OCI-LY7 (cell line): ENCODE measurements at regions of chr2 and their contacts with region 1.

Region 1: GRCh38 chr2:191150600-191151330 is at the start of gene STAT4:
- DNase-seq: no peak
- H3K4me3 ChIP-seq: no peak within 1 kb of the TSS
- H3K27ac ChIP-seq: no peak within 1 kb of the TSS
- H3K4me1 ChIP-seq: no peaks in the 10 kb centered on the region
- CTCF ChIP-seq: no peak
- total RNA-seq, gene STAT4: not detected in 2 replicates

Region 2: DNA sequence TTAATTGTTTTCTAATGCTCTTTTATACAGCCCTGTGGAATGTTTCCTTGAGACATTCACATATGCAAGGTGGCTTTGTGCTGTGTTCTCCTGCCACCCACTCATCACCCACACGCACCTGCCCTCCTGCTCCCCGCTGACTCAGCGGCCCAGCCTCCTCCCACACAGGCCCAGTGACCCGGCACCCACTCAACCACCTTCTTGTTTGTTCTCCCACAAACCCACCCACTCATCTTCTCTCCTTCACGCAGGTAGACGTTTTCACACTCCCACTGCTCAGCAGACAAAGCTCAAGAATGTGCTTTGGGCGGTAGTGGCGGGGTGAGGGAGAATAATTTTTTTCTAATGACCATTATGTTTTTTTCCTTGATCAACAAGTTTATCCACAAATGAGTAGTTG is 587.7 kb before region 1 on chr2:
- CTCF ChIA-PET with region 1: no interaction called
- POLR2A ChIA-PET with region 1: no interaction called
- intact Hi-C with region 1: no loop called
- DNase-seq: no peak
- H3K4me3 ChIP-seq: no peak overlapping the region
- H3K27ac ChIP-seq: no peak overlapping the region
- H3K4me1 ChIP-seq: no peaks in the 10 kb centered on the region
- CTCF ChIP-seq: no peak

Region 3: DNA sequence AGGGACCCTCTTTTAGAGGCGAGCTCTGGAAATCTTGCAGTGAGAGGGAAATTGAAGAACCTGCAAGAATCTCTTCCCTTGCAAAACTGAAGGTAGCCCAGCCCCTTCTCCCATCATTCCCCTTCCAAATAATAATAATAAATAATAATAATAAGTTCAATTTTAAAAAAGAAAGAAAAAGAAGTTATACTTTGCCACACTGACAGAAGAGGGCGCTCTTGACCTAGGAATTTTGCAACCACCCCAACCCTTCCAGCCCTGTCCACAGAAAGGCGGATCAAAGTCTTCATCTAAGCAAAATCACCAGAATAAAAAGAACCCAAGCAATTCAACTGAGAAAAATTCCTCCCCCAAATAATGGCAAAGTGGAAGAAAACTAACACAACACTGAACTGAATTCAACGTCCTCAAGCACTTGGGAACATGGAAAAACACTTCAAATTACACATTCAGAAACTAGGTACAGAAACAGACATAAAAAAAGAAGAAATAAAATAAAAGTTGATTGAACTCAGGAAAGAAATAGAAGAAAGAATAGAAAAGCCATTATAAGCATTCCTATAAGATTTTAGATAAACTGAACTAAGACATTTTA is 369.1 kb before region 1 on chr2:
- CTCF ChIA-PET with region 1: no interaction called
- POLR2A ChIA-PET with region 1: no interaction called
- intact Hi-C with region 1: loop called (anchors 2 kb)
- DNase-seq: peak; percentile 51
- H3K4me3 ChIP-seq: no peak overlapping the region
- H3K27ac ChIP-seq: no peak overlapping the region
- H3K4me1 ChIP-seq: no peaks in the 10 kb centered on the region
- CTCF ChIP-seq: peak; percentile 79

Region 4: GRCh38 chr2:190853531-190854383 is 297.0 kb before region 1 on chr2:
- CTCF ChIA-PET with region 1: no interaction called
- POLR2A ChIA-PET with region 1: no interaction called
- intact Hi-C with region 1: loop called (anchors 10 kb)
- DNase-seq: no peak
- H3K4me3 ChIP-seq: no peak overlapping the region
- H3K27ac ChIP-seq: no peak overlapping the region
- H3K4me1 ChIP-seq: no peaks in the 10 kb centered on the region
- CTCF ChIP-seq: no peak

Region 5: DNA sequence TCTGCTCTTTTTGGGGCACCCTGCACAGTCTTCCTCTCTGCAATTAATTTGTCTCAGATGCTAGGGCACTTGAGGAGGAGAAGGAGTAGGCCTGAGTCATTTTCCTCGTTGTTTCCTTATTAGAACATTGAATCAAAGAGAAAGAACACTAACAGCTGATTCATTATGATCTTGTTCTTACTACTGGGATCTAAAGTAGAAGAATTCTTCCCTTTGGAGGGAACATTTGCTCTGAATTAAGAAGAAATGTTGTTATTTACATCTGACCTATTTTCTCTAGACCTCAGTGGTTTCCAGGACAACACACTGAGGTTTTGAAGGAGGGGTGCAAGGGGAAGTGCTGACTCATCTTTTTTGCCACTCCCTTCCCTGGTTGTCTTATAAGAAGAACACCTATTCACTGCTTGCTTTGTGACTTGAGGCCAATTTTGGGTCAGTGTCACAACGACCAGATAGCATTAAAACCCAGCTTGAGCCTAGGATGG is 112.5 kb before region 1 on chr2:
- CTCF ChIA-PET with region 1: no interaction called
- POLR2A ChIA-PET with region 1: no interaction called
- intact Hi-C with region 1: no loop called
- DNase-seq: no peak
- H3K4me3 ChIP-seq: no peak overlapping the region
- H3K27ac ChIP-seq: no peak overlapping the region
- H3K4me1 ChIP-seq: no peaks in the 10 kb centered on the region
- CTCF ChIP-seq: no peak

Region 6: DNA sequence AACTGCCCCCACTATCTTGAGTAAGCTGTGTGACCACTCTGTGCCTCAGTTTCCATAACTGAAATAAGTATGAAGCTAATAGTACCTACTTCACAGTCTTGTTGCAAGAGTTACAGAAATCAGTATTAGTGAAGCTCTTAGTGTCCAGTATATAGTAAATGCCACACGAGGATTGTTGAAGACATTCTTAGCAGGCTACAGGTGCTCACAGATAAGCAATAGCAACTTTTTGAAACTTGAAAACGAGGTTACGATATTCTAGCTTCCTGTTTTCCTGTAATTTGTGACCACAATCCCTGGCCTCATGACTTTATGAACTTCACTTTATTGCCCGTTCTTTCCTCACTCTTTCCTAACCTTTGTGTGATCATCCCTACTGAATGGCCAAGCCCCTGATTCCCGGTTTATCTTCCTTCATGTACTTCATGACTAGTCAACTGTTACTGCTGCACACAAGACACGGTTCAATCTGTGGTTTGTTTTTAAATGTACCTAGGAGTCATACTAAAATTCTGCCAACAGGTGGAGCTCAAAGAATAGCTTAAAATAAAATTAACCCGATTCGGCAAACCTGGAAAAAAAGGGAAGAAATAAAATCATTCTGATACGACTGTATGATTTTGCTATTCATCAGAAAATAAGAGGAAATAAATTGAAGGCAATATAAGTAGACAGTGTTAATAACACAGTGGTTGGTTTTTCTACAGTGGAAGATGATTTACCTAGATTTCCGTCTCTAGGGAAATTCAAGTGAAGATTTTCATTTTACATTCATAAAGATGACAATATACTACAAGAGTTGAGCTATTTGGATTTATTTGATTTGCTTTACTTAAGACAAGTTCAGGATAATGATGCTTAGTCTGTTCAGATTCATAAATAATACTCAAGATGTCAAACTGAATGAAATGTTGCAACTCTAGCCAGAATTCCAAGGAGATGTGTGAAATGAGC is 98.7 kb before region 1 on chr2:
- CTCF ChIA-PET with region 1: interaction called, 7 read pairs
- POLR2A ChIA-PET with region 1: interaction called, 5 read pairs
- intact Hi-C with region 1: loop called (anchors 1 kb)
- DNase-seq: peak; percentile 61
- H3K4me3 ChIP-seq: no peak overlapping the region
- H3K27ac ChIP-seq: no peak overlapping the region
- H3K4me1 ChIP-seq: peaks cover 7% of the 10 kb centered on the region
- CTCF ChIP-seq: peak; percentile 90